GM13977 (cell line): ENCODE measurements at regions of chr1 and their contacts with region 1.

Region 1: DNA sequence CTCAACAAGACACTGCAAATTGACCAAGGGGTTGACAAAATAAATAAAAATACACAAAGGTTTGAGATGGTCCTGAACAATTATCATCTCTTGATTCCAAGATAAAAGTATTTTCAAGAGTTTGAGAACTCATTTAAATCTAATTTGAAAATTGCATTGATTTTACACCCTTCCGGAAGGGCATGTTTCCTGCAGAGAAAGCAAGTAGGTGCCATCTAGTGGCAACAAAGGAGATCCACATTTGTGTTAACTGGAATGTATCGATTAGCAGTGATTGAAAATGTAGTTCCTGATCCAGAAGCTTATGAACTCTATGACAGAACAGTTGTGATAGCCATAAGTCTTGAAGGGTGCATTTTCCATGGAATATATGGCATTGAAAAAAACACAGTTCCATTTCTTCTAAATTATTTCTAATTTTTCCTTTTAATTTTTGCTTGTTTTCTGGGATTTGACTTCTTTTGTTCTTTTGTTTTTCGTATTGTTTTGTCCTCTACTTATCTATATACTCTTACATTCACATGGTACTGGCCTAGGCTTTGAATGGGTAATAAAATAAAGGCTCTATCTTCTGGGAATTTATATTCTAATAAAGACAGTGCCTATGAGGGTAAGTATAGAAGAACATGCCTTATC is 143.7 kb downstream of the DNM3 start:
- DNase-seq: peak; percentile 26
- CTCF ChIP-seq: peak; percentile 72

Region 2: DNA sequence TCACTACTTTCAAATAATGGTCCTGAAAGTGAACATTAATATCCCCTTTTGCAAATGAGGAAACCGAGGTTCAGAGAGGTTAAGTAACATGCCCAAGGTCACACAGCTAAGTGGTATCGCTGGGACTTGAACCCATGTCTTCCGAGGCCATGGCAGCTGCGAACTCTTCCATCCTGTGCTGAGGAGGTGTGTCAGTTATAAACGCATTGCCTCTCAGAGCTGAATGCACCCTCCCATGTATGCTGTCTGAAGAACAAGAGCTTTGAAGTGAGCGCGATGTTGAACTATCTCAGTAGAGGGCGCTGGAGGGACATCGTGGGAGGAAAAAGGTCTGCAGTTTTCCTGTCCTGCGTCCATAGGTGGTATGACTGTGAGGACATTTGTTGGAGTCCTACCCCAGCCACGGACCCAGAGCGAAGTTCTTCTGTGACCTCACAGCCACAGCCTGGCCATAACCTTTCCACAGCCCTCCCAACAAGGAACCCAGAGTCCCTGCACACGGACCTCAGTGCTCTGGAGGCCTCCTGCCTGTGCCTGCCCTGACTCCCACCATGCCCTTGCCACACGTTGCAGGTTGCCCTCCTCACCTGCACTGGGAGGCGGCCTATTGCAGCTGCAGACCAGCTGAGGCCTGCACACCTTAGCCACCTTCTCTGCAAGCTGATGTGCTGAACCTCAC is 340.0 kb before region 1 on chr1:
- in situ Hi-C with region 1: loop called (anchors 25 kb)
- DNase-seq: peak; percentile 61
- CTCF ChIP-seq: peak; percentile 84

Region 3: DNA sequence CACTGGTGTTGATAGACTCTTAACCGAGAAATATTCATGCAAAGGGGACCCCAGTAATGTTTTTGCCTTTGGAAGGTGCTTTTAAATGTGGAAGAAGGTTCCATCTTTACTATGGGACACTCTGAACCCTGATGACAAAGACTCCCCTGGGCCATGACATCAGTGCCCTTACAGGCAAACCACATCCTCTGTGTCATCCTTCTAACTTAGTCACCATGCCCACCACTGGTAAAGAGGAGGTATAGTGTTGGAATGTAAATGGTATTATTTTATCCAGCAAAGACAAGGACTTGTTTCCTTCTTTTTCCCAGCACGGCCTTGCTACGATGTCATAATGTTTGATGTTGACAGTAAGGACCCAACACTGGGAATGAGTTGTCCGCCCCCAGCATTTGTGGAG is 190.9 kb before region 1 on chr1:
- in situ Hi-C with region 1: loop called (anchors 10 kb)
- DNase-seq: no peak
- CTCF ChIP-seq: no peak